PC-3 (cell line): ENCODE measurements at regions of chr13 and their contacts with region 1.

Region 1: DNA sequence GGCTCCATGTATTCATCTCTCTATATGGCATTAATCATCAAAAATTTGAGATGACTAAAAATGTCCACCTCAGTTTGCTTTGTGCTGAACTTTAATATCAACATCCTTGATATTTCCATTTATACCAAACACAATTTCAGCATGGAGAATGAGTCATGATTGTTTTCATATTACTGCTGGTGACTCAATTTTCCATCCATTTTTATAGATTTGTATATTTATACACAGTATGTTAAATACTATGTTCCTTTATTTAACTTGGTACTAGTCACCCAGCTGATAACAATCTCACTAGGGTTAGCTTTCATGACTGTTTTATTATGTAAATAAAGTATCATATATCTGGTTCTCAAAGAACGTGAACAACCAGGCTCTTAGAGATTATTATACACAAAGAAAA is 1255.1 kb downstream of the SLITRK1 start:
- DNase-seq: peak; percentile 89
- ATAC-seq: peak; percentile 99
- H3K4me3 ChIP-seq: no peak overlapping the region
- H3K27ac ChIP-seq: peak overlapping the region; percentile 81
- H3K4me1 ChIP-seq: peaks cover 15% of the 10 kb centered on the region
- H3K27me3 ChIP-seq: no peaks in the 10 kb centered on the region
- CTCF ChIP-seq: no peak

Region 2: GRCh38 chr13:82436156-82436555 is 191.0 kb before region 1 on chr13:
- CTCF ChIA-PET with region 1: no interaction called
- POLR2A ChIA-PET with region 1: no interaction called
- intact Hi-C with region 1: loop called (anchors 1 kb)
- DNase-seq: peak; percentile 46
- ATAC-seq: peak; percentile 94
- H3K4me3 ChIP-seq: no peak overlapping the region
- H3K27ac ChIP-seq: no peak overlapping the region
- H3K4me1 ChIP-seq: no peaks in the 10 kb centered on the region
- H3K27me3 ChIP-seq: no peaks in the 10 kb centered on the region
- CTCF ChIP-seq: no peak

Region 3: GRCh38 chr13:82501834-82502233 is 125.3 kb before region 1 on chr13:
- CTCF ChIA-PET with region 1: no interaction called
- POLR2A ChIA-PET with region 1: no interaction called
- intact Hi-C with region 1: no loop called
- DNase-seq: no peak
- ATAC-seq: no peak
- H3K4me3 ChIP-seq: no peak overlapping the region
- H3K27ac ChIP-seq: no peak overlapping the region
- H3K4me1 ChIP-seq: no peaks in the 10 kb centered on the region
- H3K27me3 ChIP-seq: no peaks in the 10 kb centered on the region
- CTCF ChIP-seq: no peak

Region 4: GRCh38 chr13:82934000-82934399 is 306.8 kb after region 1 on chr13:
- CTCF ChIA-PET with region 1: no interaction called
- POLR2A ChIA-PET with region 1: no interaction called
- intact Hi-C with region 1: no loop called
- DNase-seq: no peak
- ATAC-seq: no peak
- H3K4me3 ChIP-seq: no peak overlapping the region
- H3K27ac ChIP-seq: no peak overlapping the region
- H3K4me1 ChIP-seq: no peaks in the 10 kb centered on the region
- H3K27me3 ChIP-seq: no peaks in the 10 kb centered on the region
- CTCF ChIP-seq: no peak

Region 5: DNA sequence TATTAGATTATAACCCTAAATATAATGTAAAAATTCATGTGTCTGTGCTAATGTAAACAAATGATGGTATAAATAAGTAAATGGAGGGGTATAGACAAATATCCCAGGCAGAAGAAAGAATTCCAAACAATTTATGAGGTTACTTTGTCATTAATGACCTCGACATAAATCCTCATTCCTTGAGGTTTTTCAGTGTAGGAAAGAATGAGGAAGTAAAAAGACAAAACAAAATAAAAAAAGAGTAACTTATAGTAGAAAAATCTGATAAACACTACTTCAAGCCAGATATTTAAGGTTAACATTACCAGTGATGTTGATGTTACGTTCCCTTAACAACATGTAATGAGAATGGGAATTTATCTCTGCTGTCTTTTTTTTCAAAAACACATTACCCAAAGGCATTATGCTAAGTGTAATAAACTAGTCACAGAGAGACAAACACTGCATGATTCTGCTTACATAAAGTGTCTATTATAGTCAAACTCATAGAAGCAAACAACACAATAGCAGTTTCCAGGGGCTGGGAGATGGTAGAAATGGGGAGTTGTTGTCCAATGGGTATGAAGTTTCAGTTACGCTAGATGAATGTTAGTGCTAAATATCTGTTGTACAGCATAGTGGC is 320.0 kb after region 1 on chr13:
- CTCF ChIA-PET with region 1: no interaction called
- POLR2A ChIA-PET with region 1: no interaction called
- intact Hi-C with region 1: loop called (anchors 1 kb)
- DNase-seq: peak; percentile 62
- ATAC-seq: peak; percentile 58
- H3K4me3 ChIP-seq: peak overlapping the region; percentile 35; the same call in 1 of the 2 replicates
- H3K27ac ChIP-seq: peak overlapping the region; percentile 95
- H3K4me1 ChIP-seq: peaks cover 30% of the 10 kb centered on the region
- H3K27me3 ChIP-seq: no peaks in the 10 kb centered on the region
- CTCF ChIP-seq: no peak